ENCODE measurements at regions of chr14 and their contacts with region 1.

Region 1: DNA sequence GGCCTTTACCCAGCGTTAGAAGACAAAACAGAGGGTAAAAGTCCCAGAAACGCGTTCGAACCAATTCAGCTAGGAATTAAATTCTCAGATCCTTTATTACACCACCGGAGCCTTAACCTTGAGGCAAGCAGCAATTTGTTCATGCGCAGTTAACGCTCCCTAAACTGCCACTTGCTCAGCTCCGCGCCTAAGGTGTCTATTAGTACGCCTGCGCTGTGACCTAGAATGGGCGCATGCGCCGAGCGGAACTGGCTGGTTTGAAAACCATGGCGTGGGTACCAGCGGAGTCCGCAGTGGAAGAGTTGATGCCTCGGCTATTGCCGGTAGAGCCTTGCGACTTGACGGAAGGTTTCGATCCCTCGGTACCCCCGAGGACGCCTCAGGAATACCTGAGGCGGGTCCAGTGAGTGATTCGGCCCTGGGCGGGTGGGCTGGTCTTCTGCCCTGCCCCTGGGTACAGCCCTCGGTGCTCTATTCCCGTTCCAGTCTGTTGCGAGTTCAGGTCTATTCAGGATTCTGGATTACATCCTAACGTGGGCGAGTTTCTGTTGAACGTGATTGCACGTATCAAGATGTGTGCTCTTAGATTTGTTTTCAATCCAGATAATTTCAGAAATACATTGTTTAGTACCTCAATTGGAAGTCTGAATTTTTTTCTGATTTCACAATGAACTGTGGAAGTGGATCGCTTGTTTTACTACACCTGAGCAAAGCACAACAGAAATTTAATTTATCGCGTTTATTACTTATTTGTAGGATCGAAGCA is at the start of gene GEMIN2:
- DNase-seq: peak; percentile 98
- H3K4me3 Mint-ChIP-seq: peak within 1 kb of the TSS; percentile 98
- H3K27ac Mint-ChIP-seq: peak within 1 kb of the TSS; percentile 97
- H3K4me1 Mint-ChIP-seq: peaks cover 18% of the 10 kb centered on the region
- H3K27me3 Mint-ChIP-seq: no peaks in the 10 kb centered on the region
- total RNA-seq, gene GEMIN2: 23.1 and 24.9 TPM in 2 replicates

Region 2: GRCh38 chr14:39015360-39015961 is 98.8 kb before region 1 on chr14:
- intact Hi-C with region 1: no loop called
- DNase-seq: peak; percentile 69
- H3K4me3 Mint-ChIP-seq: no peak overlapping the region
- H3K27ac Mint-ChIP-seq: no peak overlapping the region
- H3K4me1 Mint-ChIP-seq: no peaks in the 10 kb centered on the region
- H3K27me3 Mint-ChIP-seq: no peaks in the 10 kb centered on the region

Region 3: DNA sequence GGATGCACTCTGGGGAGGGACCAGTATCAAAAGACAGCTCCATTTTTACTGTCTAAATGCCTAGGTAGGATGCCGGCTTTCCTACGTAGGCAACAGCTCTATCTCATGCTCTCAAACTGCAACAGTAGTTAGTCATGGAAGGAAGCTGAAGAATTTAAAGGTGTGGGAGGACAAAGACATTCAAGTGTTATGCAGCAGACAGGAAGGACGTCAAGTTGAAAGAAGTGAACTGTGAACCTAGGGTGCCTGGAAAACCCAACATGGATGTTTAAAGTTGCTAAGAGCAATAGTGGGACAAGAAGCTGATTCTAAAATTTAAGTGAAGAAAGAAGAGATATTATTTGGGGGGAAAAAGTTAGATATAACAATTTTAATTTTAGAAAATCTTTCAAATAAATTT is 17.1 kb before region 1 on chr14:
- intact Hi-C with region 1: loop called (anchors 2 kb)
- DNase-seq: peak; percentile 68
- H3K4me3 Mint-ChIP-seq: peak overlapping the region; percentile 45
- H3K27ac Mint-ChIP-seq: peak overlapping the region; percentile 70
- H3K4me1 Mint-ChIP-seq: peaks cover 33% of the 10 kb centered on the region
- H3K27me3 Mint-ChIP-seq: no peaks in the 10 kb centered on the region

Measured in activated CD4-positive, alpha-beta T cell treated with anti-CD3 and anti-CD28 coated beads, Interleukin-2, amount 10 ng/mL, durations not matched to agents 24 days and 14 days (primary cell).